ENCODE measurements at regions of chr11 and their contacts with region 1.

Region 1: GRCh38 chr11:12110201-12110713 is at the start of gene MICAL2:
- DNase-seq: peak; percentile 87
- H3K4me3 ChIP-seq: peak within 1 kb of the TSS; percentile 50 to 86 (median 73)
- H3K27ac ChIP-seq: peak within 1 kb of the TSS; percentile 56
- H3K4me1 ChIP-seq: peaks cover 40% of the 10 kb centered on the region
- H3K27me3 ChIP-seq: no peaks in the 10 kb centered on the region
- CTCF ChIP-seq: no peak
- POLR2A ChIP-seq: peak; percentile 85
- total RNA-seq, gene MICAL2: 200 and 222 TPM in 2 replicates

Region 2: GRCh38 chr11:11538277-11538960 is 571.8 kb before region 1 on chr11:
- CTCF ChIA-PET with region 1: no interaction called
- POLR2A ChIA-PET with region 1: no interaction called
- dilution Hi-C with region 1: no loop called
- intact Hi-C with region 1: no loop called
- DNase-seq: no peak
- H3K4me3 ChIP-seq: no peak overlapping the region
- H3K27ac ChIP-seq: no peak overlapping the region
- H3K4me1 ChIP-seq: no peaks in the 10 kb centered on the region
- H3K27me3 ChIP-seq: no peaks in the 10 kb centered on the region
- CTCF ChIP-seq: no peak
- POLR2A ChIP-seq: no peak

Region 3: GRCh38 chr11:12122083-12122482 is 11.8 kb after region 1 on chr11:
- CTCF ChIA-PET with region 1: interaction called, 4 read pairs
- POLR2A ChIA-PET with region 1: no interaction called
- dilution Hi-C with region 1: no loop called
- intact Hi-C with region 1: loop called (anchors 1 kb)
- DNase-seq: no peak
- H3K4me3 ChIP-seq: no peak overlapping the region
- H3K27ac ChIP-seq: no peak overlapping the region
- H3K4me1 ChIP-seq: peaks cover 38% of the 10 kb centered on the region
- H3K27me3 ChIP-seq: no peaks in the 10 kb centered on the region
- CTCF ChIP-seq: peak; percentile 43 to 56
- POLR2A ChIP-seq: no peak